Ascending aorta (tissue), 2 donors: ENCODE measurements at regions of chr7 and their contacts with region 1.

Region 1: GRCh38 chr7:1532483-1533424 is 2.3 kb downstream of the MAFK start:
- DNase-seq: peak; percentile 88 to 96
- H3K4me3 ChIP-seq: peak overlapping the region; percentile 76 to 91
- H3K27ac ChIP-seq: peak overlapping the region; percentile 98 to 99
- H3K4me1 ChIP-seq: peaks cover 9 to 40% of the 10 kb centered on the region in 2 donors
- H3K27me3 ChIP-seq: no peaks in the 10 kb centered on the region
- CTCF ChIP-seq: no peak

Region 2: GRCh38 chr7:1503816-1504775 is 28.7 kb before region 1 on chr7 and contains the start of gene INTS1:
- intact Hi-C with region 1: loop called (anchors 1 kb)
- DNase-seq: peak; percentile 42 to 93
- H3K4me3 ChIP-seq: peak within 1 kb of the TSS; percentile 79 to 93
- H3K27ac ChIP-seq: peak within 1 kb of the TSS; percentile 53 to 71
- H3K4me1 ChIP-seq: peaks cover 10% of the 10 kb centered on the region in 2 donors
- H3K27me3 ChIP-seq: no peaks in the 10 kb centered on the region
- CTCF ChIP-seq: peak; percentile 59 to 97 (median 71)
- total RNA-seq, gene INTS1: 80.7 TPM

Region 3: GRCh38 chr7:1512781-1513656 is 19.7 kb before region 1 on chr7:
- intact Hi-C with region 1: loop called (anchors 1 kb)
- DNase-seq: peak; percentile 89 to 96
- H3K4me3 ChIP-seq: peak overlapping the region; percentile 46 to 56
- H3K27ac ChIP-seq: peak overlapping the region; percentile 99
- H3K4me1 ChIP-seq: peaks cover 6 to 21% of the 10 kb centered on the region in 2 donors
- H3K27me3 ChIP-seq: no peaks in the 10 kb centered on the region
- CTCF ChIP-seq: no peak

Region 4: GRCh38 chr7:1569833-1570633 is 37.3 kb after region 1 on chr7 and contains the start of gene PSMG3:
- intact Hi-C with region 1: no loop called
- DNase-seq: peak; percentile 46 to 94
- H3K4me3 ChIP-seq: peak within 1 kb of the TSS; percentile 83 to 91
- H3K27ac ChIP-seq: peak within 1 kb of the TSS; percentile 86 to 87
- H3K4me1 ChIP-seq: peaks cover 8 to 14% of the 10 kb centered on the region in 2 donors
- H3K27me3 ChIP-seq: no peaks in the 10 kb centered on the region
- CTCF ChIP-seq: peak; percentile 25 to 42 (median 35)
- total RNA-seq, gene PSMG3: 34.1 TPM